ENCODE measurements at regions of chr3 and their contacts with region 1.

Region 1: DNA sequence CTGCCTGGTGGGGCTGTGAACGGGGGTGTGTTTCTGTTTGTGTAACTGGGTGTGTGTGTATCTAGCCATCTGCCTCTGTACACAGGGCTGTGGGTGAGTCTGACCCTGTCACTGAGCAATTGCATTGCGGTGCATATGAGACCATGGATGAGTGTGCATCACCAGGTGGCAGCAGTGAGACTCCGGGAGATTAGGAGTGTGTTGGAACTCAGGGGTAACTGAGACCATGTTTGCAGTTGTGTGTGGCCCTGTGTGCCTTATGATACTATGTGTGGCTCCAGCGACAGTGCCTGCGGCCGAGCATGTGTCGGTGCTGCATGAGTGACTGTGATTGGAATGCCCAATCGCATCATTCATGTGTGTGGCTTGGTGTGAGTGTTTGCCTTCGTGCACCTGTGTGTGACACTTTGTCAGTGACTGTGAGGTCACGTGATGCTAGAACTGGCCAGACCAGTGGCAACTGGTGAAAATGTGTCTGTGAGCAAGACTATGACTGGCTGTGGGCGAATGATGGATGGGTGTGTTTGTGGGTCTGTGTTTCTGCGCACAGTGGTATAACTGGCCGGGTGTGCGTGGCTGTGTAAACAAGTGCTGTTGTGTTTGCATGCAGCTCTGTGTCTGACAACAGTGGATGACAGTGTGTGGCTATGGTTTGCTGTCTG is 14.0 kb downstream of the VILL start:
- DNase-seq: peak; percentile 94
- ATAC-seq: peak; percentile 80
- H3K4me3 ChIP-seq: no peak overlapping the region; the same call in 1 of the 2 replicates
- H3K27ac ChIP-seq: peak overlapping the region; percentile 80
- H3K4me1 ChIP-seq: peaks cover 27% of the 10 kb centered on the region
- H3K27me3 ChIP-seq: no peaks in the 10 kb centered on the region
- CTCF ChIP-seq: peak; percentile 94

Region 2: DNA sequence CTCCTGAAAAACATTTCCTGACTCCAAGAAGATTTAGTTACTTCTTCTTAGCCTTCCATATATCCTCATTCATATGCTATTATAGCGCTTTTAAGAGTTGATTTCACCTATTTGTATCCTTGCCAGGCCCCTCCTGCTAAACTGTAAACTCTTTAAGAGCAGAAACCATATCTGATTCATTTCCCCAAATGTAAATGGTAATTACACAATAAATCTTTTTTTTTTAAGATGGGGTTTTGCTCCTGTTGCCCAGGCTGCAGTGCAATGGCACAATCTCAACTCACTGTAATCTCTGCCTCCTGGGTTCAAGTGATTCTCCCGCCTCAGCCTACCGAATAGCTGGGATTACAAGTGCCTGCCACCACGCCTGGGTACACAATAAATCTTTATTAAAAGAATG is 38.9 kb after region 1 on chr3:
- CTCF ChIA-PET with region 1: no interaction called
- POLR2A ChIA-PET with region 1: no interaction called
- intact Hi-C with region 1: loop called (anchors 1 kb)
- DNase-seq: no peak
- ATAC-seq: peak; percentile 57
- H3K4me3 ChIP-seq: no peak overlapping the region
- H3K27ac ChIP-seq: no peak overlapping the region
- H3K4me1 ChIP-seq: no peaks in the 10 kb centered on the region
- H3K27me3 ChIP-seq: no peaks in the 10 kb centered on the region; the same call in 1 of the 2 replicates
- CTCF ChIP-seq: no peak

Region 3: GRCh38 chr3:38125308-38126120 is 121.0 kb after region 1 on chr3:
- CTCF ChIA-PET with region 1: no interaction called
- POLR2A ChIA-PET with region 1: no interaction called
- intact Hi-C with region 1: loop called (anchors 2 kb)
- DNase-seq: no peak
- ATAC-seq: no peak; the same call in 1 of the 2 replicates
- H3K4me3 ChIP-seq: no peak overlapping the region
- H3K27ac ChIP-seq: peak overlapping the region; percentile 71
- H3K4me1 ChIP-seq: peaks cover 21% of the 10 kb centered on the region
- H3K27me3 ChIP-seq: no peaks in the 10 kb centered on the region
- CTCF ChIP-seq: no peak

Region 4: GRCh38 chr3:38164966-38165680 is 160.6 kb after region 1 on chr3 and contains the start of gene OXSR1:
- CTCF ChIA-PET with region 1: no interaction called
- POLR2A ChIA-PET with region 1: no interaction called
- intact Hi-C with region 1: loop called (anchors 1 kb)
- DNase-seq: peak; percentile 100
- ATAC-seq: peak; percentile 84
- H3K4me3 ChIP-seq: peak within 1 kb of the TSS; percentile 94
- H3K27ac ChIP-seq: peak within 1 kb of the TSS; percentile 97
- H3K4me1 ChIP-seq: peaks cover 44% of the 10 kb centered on the region
- H3K27me3 ChIP-seq: no peaks in the 10 kb centered on the region
- CTCF ChIP-seq: no peak
- total RNA-seq, gene OXSR1: 42.2 and 47.7 TPM in 2 replicates

Region 5: DNA sequence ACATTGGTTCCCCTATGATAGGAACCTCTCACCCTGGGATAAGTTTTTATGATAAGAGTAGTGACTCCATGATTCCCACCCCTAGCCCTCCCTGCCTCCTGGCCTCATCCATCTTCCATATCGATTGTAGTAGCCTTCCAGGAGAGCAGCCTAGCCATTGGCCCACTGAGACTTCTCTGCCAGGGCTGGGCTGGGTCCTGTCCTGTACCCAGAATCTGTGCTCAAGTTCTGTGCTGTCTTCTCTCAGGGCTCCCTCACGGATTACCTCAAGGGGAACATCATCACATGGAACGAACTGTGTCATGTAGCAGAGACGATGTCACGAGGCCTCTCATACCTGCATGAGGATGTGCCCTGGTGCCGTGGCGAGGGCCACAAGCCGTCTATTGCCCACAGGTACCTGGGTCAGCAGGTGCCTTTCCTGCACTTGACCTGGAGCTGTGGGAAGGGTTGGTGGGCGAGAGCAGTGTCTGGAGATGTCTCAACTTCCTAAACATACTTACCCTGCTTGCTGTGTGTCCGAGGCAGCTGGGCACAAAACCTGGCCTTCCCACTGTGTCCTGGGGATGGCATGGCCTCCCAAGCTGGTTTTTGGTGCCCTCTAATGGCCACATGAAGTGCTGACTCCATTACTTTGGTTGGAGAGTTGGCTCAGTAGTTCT is 475.0 kb after region 1 on chr3:
- CTCF ChIA-PET with region 1: no interaction called
- POLR2A ChIA-PET with region 1: no interaction called
- intact Hi-C with region 1: loop called (anchors 10 kb)
- DNase-seq: peak; percentile 76
- ATAC-seq: peak; percentile 96
- H3K4me3 ChIP-seq: no peak overlapping the region
- H3K27ac ChIP-seq: no peak overlapping the region
- H3K4me1 ChIP-seq: no peaks in the 10 kb centered on the region
- H3K27me3 ChIP-seq: no peaks in the 10 kb centered on the region
- CTCF ChIP-seq: peak; percentile 93